ENCODE measurements at regions of chr1 and their contacts with region 1.

Region 1: GRCh38 chr1:27671964-27672749 is at the start of gene IFI6:
- DNase-seq: peak; percentile 86 to 90
- H3K4me3 ChIP-seq: peak within 1 kb of the TSS; percentile 38
- H3K4me3 Mint-ChIP-seq: peak within 1 kb of the TSS; percentile 62
- H3K27ac Mint-ChIP-seq: peak within 1 kb of the TSS; percentile 19
- H3K4me1 ChIP-seq: peaks cover 12% of the 10 kb centered on the region
- H3K4me1 Mint-ChIP-seq: peaks cover 6% of the 10 kb centered on the region
- H3K27me3 ChIP-seq: no peaks in the 10 kb centered on the region
- H3K27me3 Mint-ChIP-seq: no peaks in the 10 kb centered on the region
- CTCF ChIP-seq: peak; percentile 18 to 31
- total RNA-seq, gene IFI6: 39.0 and 44.5 TPM in 2 replicates

Region 2: DNA sequence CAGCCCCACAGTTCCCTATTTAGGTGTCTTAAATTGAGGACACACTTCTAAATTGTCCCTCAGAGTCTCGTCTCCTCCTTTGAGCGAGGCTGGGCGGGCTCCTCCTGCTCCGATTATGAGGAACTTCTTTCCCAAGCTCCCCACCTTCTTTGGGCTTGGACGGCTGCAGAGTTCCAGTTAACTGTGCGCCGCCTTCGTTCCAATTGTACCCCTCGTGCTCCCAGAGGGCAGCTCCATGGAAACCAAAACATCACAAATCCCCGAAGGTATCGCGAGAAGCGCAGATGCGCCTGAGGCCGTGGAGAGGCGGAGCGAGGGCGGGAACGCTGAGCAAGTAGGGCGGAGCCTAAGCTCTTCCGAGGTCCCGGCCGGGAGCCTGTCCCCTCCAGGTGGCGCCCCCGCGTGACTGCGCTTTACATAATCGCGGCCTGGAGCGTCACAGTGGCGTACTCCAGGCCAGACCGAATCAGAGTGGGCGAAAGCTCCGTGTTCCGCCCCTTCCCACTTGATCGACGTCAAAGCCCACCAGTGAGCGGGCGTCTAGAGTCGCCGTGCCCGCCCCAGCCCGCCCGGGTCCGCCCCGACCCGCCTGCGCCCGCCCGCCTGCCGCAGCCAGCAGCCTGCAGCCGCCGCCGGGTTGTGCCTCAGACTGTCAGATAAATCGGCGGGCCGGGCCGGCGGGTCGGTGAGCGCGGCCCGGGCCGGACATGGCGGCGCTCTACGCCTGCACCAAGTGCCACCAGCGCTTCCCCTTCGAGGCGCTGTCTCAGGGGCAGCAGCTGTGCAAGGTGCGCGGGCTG is 53.4 kb after region 1 on chr1 and contains the start of gene FAM76A:
- CTCF ChIA-PET with region 1: interaction called, 20 read pairs
- POLR2A ChIA-PET with region 1: interaction called, 9 read pairs
- intact Hi-C with region 1: loop called (anchors 1 kb)
- DNase-seq: peak; percentile 96 to 97
- H3K4me3 ChIP-seq: peak within 1 kb of the TSS; percentile 47
- H3K4me3 Mint-ChIP-seq: peak within 1 kb of the TSS; percentile 88
- H3K27ac Mint-ChIP-seq: peak within 1 kb of the TSS; percentile 99
- H3K4me1 ChIP-seq: 0 out of 2 replicates have a peak, but pooled peaks cover 7% of the 10 kb centered on the region
- H3K4me1 Mint-ChIP-seq: no peaks in the 10 kb centered on the region
- H3K27me3 ChIP-seq: no peaks in the 10 kb centered on the region
- H3K27me3 Mint-ChIP-seq: no peaks in the 10 kb centered on the region
- CTCF ChIP-seq: peak in 1 of 2 experiments; percentile 54
- total RNA-seq, gene FAM76A: 9.4 and 9.8 TPM in 2 replicates